A673 (cell line): ENCODE measurements at regions of chr3 and their contacts with region 1.

Region 1: DNA sequence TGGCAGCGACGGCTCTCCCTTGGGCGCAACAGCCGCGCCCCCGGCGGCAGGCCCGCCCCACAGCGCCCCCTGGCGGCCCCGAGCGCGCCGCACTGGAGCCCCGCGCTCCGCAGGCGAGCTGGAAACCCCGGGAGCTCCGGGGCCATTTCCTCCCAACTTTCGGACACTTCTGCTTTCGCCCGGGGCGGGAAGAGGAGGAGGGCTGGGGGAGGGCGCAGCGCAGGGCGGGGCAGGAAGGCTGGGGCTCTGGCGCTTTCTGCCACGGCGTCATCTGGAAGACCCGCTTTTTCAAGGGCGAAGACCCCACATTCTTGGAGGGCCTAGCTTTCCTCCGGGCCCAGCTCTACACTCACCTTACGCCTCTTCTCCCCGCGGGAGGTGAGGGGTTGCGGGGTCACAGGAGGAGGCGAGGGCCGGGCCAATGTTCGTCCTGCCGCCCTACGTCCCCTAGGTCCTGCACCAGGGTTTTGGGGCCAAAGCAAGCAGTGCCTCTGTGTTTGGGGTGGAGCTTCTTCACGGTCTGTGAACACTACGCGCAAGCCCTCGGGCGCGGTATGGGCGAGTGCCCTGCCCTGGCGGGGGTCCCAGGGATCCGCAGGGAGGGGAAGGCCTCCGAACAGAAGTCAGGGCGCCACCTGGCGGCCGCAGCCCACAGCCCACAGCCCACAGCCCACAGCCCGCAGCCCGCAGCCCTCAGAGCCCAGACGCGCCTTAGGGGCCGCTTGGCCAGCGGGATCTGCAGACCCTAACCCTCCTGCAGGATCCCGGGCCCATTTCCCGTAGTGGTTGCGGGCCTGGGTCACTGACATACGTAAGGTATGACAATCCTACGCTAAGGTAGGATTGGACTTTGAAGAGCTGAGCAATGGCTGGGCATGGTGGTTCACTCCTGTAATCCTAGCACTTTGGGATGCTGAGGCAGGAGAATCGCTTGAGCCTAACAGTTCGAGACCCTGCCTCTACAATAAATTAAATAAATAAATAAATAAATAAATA is 31.1 kb downstream of the FOXL2 start:
- DNase-seq: peak; percentile 92
- H3K4me3 ChIP-seq: peak overlapping the region; percentile 86
- H3K27ac ChIP-seq: peak overlapping the region; percentile 77
- H3K4me1 ChIP-seq: no peaks in the 10 kb centered on the region
- H3K27me3 ChIP-seq: no peaks in the 10 kb centered on the region
- CTCF ChIP-seq: peak; percentile 84

Region 2: DNA sequence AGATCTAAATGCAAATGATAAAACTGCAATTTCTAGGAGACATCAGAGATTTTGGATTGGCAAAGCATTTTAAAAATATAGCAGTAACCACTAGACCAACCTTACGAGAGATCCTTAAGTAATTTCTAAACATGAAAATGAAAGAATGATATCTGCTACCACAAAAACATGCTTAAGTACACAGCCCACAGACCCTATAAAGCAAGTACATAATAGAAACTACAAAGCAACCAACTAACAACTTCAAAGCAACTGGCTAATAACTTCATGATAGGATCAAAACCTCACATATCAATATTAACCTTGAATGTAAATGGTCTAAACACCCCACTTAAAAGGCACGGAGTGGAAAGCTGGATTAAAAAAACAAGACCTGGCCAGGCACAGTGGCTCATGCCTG is 1361.6 kb before region 1 on chr3:
- CTCF ChIA-PET with region 1: no interaction called
- POLR2A ChIA-PET with region 1: no interaction called
- intact Hi-C with region 1: no loop called
- DNase-seq: no peak
- H3K4me3 ChIP-seq: no peak overlapping the region
- H3K27ac ChIP-seq: no peak overlapping the region
- H3K4me1 ChIP-seq: no peaks in the 10 kb centered on the region
- H3K27me3 ChIP-seq: peaks cover 8% of the 10 kb centered on the region
- CTCF ChIP-seq: no peak

Region 3: DNA sequence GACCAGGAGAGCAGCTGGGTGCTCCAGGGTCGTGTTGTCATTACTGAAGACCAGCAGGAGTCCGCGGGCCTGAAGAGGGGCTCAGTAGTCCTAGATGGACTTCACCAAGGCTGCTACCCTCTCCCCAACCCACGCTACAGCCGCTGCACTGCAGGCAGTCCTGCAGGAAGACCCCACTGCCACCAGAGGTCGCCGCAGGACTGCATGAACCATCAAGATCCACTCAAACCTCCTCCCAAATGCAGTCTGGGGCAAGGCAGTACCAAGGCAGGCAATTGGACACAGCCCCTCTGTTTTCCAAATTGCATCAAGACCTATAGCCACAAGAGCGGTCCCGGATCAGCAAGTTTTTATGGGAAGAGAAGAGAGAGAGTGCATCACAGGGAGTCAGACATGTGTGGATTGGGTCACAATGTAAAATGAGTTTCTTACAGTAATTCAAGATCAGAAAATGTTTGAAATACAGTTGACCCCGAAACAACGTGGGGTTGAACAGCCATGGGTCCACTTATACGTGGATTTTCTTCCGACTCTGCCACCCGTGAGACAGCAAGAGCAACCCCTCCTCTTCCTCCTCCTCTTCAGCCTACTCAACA is 847.1 kb before region 1 on chr3:
- CTCF ChIA-PET with region 1: no interaction called
- POLR2A ChIA-PET with region 1: no interaction called
- intact Hi-C with region 1: loop called (anchors 2 kb)
- DNase-seq: peak; percentile 85
- H3K4me3 ChIP-seq: no peak overlapping the region
- H3K27ac ChIP-seq: no peak overlapping the region
- H3K4me1 ChIP-seq: no peaks in the 10 kb centered on the region
- H3K27me3 ChIP-seq: no peaks in the 10 kb centered on the region
- CTCF ChIP-seq: peak; percentile 99

Region 4: GRCh38 chr3:138479438-138479863 is 436.4 kb before region 1 on chr3:
- CTCF ChIA-PET with region 1: interaction called, 45 read pairs
- POLR2A ChIA-PET with region 1: no interaction called
- intact Hi-C with region 1: loop called (anchors 1 kb)
- DNase-seq: peak; percentile 71
- H3K4me3 ChIP-seq: no peak overlapping the region
- H3K27ac ChIP-seq: no peak overlapping the region
- H3K4me1 ChIP-seq: no peaks in the 10 kb centered on the region
- H3K27me3 ChIP-seq: no peaks in the 10 kb centered on the region
- CTCF ChIP-seq: peak; percentile 92

Region 5: GRCh38 chr3:138694287-138695007 is 221.4 kb before region 1 on chr3:
- CTCF ChIA-PET with region 1: interaction called, 55 read pairs
- POLR2A ChIA-PET with region 1: no interaction called
- intact Hi-C with region 1: loop called (anchors 1 kb)
- DNase-seq: no peak
- H3K4me3 ChIP-seq: no peak overlapping the region
- H3K27ac ChIP-seq: no peak overlapping the region
- H3K4me1 ChIP-seq: no peaks in the 10 kb centered on the region
- H3K27me3 ChIP-seq: no peaks in the 10 kb centered on the region
- CTCF ChIP-seq: no peak

Region 6: DNA sequence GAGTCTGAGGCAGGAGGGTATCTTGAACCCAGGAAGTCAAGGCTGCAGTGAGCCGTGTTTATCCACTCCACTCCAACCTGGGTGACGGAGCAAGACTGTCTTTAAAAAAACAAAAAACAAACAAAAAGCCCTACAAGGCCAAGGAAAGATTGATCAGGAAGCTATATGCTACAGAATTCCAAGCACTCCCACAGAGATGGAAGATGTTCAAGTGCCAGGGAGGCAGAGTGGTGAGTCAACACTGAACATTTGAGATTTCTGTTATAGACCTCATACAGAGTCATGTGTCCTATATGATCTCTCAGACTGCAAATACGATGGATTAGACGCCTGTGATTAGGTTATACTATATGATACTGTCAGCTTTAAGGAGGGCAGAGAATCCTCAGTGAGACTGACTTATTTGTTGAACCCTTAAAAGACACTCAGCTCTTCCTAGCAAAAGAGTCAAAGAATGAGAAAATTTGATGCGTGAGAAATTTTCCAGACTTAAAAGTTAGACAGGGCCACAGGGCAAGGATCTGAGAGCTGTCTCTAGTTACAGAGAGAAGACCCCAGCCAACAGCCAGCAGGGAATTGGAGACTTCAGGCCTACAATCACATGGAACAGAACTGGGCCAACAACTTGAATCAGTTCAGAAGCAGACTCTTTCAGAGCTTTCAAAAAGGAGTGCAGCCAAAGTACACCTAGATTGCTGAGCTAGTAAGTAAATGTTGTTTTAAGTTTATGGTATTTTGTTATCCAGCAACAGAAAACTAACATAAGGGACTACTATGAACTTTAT is 188.7 kb before region 1 on chr3:
- CTCF ChIA-PET with region 1: interaction called, 12 read pairs
- POLR2A ChIA-PET with region 1: no interaction called
- intact Hi-C with region 1: no loop called
- DNase-seq: peak; percentile 38
- H3K4me3 ChIP-seq: no peak overlapping the region
- H3K27ac ChIP-seq: no peak overlapping the region
- H3K4me1 ChIP-seq: peaks cover 28% of the 10 kb centered on the region
- H3K27me3 ChIP-seq: no peaks in the 10 kb centered on the region
- CTCF ChIP-seq: no peak

Region 7: DNA sequence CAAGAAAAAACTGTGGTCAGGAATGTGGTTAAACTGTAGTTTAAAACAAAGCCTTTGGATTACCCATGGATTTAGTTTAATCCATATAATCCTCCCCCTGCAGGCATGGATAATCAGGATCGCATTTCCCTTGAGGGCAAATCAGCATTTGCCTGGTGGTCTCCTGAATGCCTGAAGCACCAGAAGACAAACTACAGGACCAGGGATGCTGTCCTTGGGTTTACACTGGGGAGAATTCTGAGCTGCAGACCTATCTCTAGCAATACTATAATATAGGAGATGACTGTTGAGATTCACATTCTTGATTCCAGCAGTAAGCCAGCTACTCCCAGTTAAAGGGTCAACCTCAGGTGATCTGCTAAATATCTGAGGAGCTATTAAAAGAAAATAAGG is 91.7 kb before region 1 on chr3:
- CTCF ChIA-PET with region 1: no interaction called
- POLR2A ChIA-PET with region 1: no interaction called
- intact Hi-C with region 1: no loop called
- DNase-seq: peak; percentile 64
- H3K4me3 ChIP-seq: no peak overlapping the region
- H3K27ac ChIP-seq: peak overlapping the region; percentile 65
- H3K4me1 ChIP-seq: no peaks in the 10 kb centered on the region
- H3K27me3 ChIP-seq: no peaks in the 10 kb centered on the region
- CTCF ChIP-seq: no peak

Region 8: GRCh38 chr3:138974462-138974861 is 58.7 kb after region 1 on chr3:
- CTCF ChIA-PET with region 1: interaction called, 15 read pairs
- POLR2A ChIA-PET with region 1: no interaction called
- intact Hi-C with region 1: no loop called
- DNase-seq: no peak
- H3K4me3 ChIP-seq: no peak overlapping the region
- H3K27ac ChIP-seq: no peak overlapping the region
- H3K4me1 ChIP-seq: no peaks in the 10 kb centered on the region
- H3K27me3 ChIP-seq: no peaks in the 10 kb centered on the region
- CTCF ChIP-seq: no peak